Activated CD8-positive, alpha-beta memory T cell treated with anti-CD3 and anti-CD28 coated beads, Interleukin-2, amount 10 ng/mL, durations not matched to agents 7 days and 5 days (primary cell): ENCODE measurements at regions of chr2 and their contacts with region 1.

Region 1: DNA sequence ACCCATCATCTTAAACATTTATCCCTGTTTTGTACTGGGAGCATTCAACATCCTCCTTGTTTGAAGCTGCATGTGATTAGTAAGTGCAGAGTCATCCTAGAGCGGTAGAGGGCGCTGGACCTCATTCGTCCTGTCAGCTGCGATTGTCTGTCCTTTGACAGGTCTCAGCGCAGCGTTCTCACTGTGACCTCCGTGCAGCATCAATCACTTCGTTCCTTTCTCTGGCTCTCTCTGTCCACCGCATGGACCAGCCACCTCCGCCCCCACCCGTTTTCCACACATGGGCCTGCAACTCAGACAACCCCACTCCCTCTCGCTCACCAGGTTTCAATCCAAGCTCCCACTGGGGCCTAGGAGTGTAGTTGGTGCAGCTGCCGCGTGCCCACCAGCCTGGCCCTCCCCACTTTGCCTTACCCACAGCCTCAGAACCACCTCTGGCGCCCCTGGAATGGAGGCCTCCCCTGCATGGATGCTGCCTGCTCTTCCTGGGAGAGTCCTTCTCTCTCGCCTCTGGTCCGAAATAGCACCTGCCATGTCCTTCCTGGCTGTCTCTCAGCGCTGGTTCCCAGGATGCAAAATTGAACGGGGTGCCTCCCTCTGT is 90.5 kb downstream of the NDUFA10 start:
- DNase-seq: peak; percentile 73
- ATAC-seq: peak; percentile 75
- H3K4me3 Mint-ChIP-seq: no peak overlapping the region
- H3K27ac Mint-ChIP-seq: no peak overlapping the region
- H3K4me1 Mint-ChIP-seq: peaks cover 4% of the 10 kb centered on the region
- H3K27me3 Mint-ChIP-seq: no peaks in the 10 kb centered on the region

Region 2: DNA sequence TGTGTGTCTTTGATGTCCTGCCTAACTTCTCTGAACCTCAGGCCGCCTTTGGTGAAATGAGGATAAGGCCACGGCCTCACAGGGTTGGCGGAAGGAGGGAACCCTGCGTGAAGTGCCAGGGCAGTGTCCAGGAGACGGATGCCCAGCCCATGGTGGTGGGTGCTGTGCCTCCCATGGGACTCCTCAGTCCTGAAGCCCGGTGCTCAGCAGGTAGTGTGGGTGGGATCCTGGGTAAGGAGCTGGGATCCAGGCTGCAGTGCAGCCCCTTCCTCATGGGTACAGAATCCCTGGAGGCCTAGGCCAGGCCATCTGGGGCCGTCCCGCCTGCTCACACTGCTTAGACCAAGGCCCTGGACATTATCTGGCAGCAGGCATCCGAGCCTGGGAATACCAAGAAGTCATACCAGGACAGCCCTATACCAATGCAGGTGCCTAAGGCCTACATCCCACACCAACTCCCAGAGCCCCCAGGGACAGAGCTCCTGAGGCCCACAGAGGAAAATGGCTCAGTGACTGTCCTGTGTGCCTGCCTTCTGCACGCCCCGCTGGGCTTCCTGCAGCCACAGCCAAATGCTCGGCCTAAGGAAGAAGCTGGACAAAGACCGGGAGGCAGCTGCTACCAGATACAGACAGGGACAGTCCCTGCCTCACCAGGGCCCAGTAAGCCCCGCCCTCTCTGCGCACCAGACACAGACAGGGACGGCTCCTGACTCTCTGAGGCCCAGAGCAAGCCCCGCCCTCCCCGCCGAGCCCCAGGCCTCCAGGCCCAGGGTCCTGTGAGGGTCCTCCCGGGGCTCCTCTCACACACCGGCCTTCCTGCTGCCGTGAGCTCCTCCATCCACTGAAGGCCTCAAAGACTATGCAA is 12.4 kb after region 1 on chr2:
- CTCF ChIA-PET with region 1: interaction called, 12 read pairs
- DNase-seq: no peak
- ATAC-seq: no peak
- H3K4me3 Mint-ChIP-seq: no peak overlapping the region
- H3K27ac Mint-ChIP-seq: no peak overlapping the region
- H3K4me1 Mint-ChIP-seq: peaks cover 10% of the 10 kb centered on the region
- H3K27me3 Mint-ChIP-seq: no peaks in the 10 kb centered on the region

Region 3: DNA sequence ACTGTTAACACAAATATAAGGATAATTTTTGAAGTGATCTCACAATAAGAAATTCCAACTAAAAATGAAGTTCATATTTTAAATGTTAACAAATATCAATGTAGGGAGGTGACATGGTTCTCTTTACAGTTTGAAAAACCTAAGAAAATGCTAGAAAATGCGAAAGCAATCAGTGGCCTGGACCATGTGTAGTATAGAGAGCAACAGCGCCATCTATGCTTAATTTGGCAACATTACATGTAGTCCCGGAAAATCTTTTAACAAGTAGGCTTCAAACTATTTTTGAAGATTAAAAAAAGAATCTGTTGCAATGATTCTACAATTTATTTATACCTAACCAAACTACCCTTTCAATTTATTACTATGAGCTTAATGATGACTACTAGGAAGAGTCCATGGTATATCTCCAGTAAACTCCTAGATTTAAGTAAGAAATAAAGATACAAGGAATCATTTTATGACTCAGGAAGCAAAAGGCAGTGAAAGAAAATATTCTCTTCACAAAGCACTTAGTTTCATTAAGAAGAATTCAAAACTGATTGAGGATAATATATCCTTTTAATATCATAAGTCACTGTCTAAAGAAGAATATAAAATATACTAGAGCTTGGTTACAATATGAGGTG is 57.1 kb after region 1 on chr2:
- CTCF ChIA-PET with region 1: interaction called, 21 read pairs
- DNase-seq: no peak
- ATAC-seq: peak; percentile 57
- H3K4me3 Mint-ChIP-seq: no peak overlapping the region
- H3K27ac Mint-ChIP-seq: no peak overlapping the region
- H3K4me1 Mint-ChIP-seq: no peaks in the 10 kb centered on the region
- H3K27me3 Mint-ChIP-seq: no peaks in the 10 kb centered on the region

Region 4: GRCh38 chr2:240013343-240013742 is 78.7 kb after region 1 on chr2:
- CTCF ChIA-PET with region 1: no interaction called
- DNase-seq: no peak
- ATAC-seq: no peak
- H3K4me3 Mint-ChIP-seq: no peak overlapping the region
- H3K27ac Mint-ChIP-seq: no peak overlapping the region
- H3K4me1 Mint-ChIP-seq: no peaks in the 10 kb centered on the region
- H3K27me3 Mint-ChIP-seq: no peaks in the 10 kb centered on the region